Naive thymus-derived CD4-positive, alpha-beta T cell (primary cell): ENCODE measurements at regions of chr17 and their contacts with region 1.

Region 1: GRCh38 chr17:77331301-77331864 is 190.6 kb downstream of the SEC14L1 start:
- DNase-seq: peak; percentile 88 to 98 (median 93)
- ATAC-seq: peak; percentile 95
- H3K4me3 ChIP-seq: peak overlapping the region; percentile 10
- H3K4me3 Mint-ChIP-seq: peak overlapping the region; percentile 78 to 91 (median 84)
- H3K27ac ChIP-seq: peak overlapping the region; percentile 66
- H3K27ac Mint-ChIP-seq: peak overlapping the region; percentile 70 to 98 (median 91)
- H3K4me1 ChIP-seq: peaks cover 29% of the 10 kb centered on the region in 2 donors
- H3K4me1 Mint-ChIP-seq: peaks cover 37 to 55% (median 48%) of the 10 kb centered on the region in 7 donors
- H3K27me3 ChIP-seq: no peaks in the 10 kb centered on the region
- H3K27me3 Mint-ChIP-seq: no peaks in the 10 kb centered on the region

Region 2: GRCh38 chr17:77280980-77281903 is 50.1 kb before region 1 on chr17:
- CTCF ChIA-PET with region 1: no interaction called
- POLR2A ChIA-PET with region 1: no interaction called
- intact Hi-C with region 1: loop called in 1 of 2 experiments (anchors 5 kb)
- DNase-seq: peak; percentile 62 to 79 (median 72)
- ATAC-seq: peak; percentile 94
- H3K4me3 ChIP-seq: peak overlapping the region; percentile 54
- H3K4me3 Mint-ChIP-seq: peak overlapping the region; percentile 75 to 88 (median 78)
- H3K27ac ChIP-seq: no peak overlapping the region
- H3K27ac Mint-ChIP-seq: peak overlapping the region; percentile 67 to 95 (median 87)
- H3K4me1 ChIP-seq: peaks cover 3 to 10% of the 10 kb centered on the region in 2 donors
- H3K4me1 Mint-ChIP-seq: peaks cover 13 to 20% (median 17%) of the 10 kb centered on the region in 7 donors
- H3K27me3 ChIP-seq: no peaks in the 10 kb centered on the region
- H3K27me3 Mint-ChIP-seq: peaks cover 0 to 47% (median 11%) of the 10 kb centered on the region in 5 donors

Region 3: GRCh38 chr17:77382966-77383612 is 51.7 kb after region 1 on chr17:
- CTCF ChIA-PET with region 1: interaction called, 9 read pairs
- POLR2A ChIA-PET with region 1: interaction called, 84 read pairs
- intact Hi-C with region 1: loop called in 1 of 2 experiments (anchors 1 kb)
- DNase-seq: no peak
- ATAC-seq: no peak
- H3K4me3 ChIP-seq: peak overlapping the region; percentile 17
- H3K4me3 Mint-ChIP-seq: peak overlapping the region; percentile 60 to 90 (median 86)
- H3K27ac ChIP-seq: peak overlapping the region; percentile 58
- H3K27ac Mint-ChIP-seq: peak overlapping the region; percentile 76 to 94 (median 93)
- H3K4me1 ChIP-seq: peaks cover 73 to 83% of the 10 kb centered on the region in 2 donors
- H3K4me1 Mint-ChIP-seq: peaks cover 59 to 94% (median 89%) of the 10 kb centered on the region in 7 donors
- H3K27me3 ChIP-seq: no peaks in the 10 kb centered on the region
- H3K27me3 Mint-ChIP-seq: no peaks in the 10 kb centered on the region

Region 4: DNA sequence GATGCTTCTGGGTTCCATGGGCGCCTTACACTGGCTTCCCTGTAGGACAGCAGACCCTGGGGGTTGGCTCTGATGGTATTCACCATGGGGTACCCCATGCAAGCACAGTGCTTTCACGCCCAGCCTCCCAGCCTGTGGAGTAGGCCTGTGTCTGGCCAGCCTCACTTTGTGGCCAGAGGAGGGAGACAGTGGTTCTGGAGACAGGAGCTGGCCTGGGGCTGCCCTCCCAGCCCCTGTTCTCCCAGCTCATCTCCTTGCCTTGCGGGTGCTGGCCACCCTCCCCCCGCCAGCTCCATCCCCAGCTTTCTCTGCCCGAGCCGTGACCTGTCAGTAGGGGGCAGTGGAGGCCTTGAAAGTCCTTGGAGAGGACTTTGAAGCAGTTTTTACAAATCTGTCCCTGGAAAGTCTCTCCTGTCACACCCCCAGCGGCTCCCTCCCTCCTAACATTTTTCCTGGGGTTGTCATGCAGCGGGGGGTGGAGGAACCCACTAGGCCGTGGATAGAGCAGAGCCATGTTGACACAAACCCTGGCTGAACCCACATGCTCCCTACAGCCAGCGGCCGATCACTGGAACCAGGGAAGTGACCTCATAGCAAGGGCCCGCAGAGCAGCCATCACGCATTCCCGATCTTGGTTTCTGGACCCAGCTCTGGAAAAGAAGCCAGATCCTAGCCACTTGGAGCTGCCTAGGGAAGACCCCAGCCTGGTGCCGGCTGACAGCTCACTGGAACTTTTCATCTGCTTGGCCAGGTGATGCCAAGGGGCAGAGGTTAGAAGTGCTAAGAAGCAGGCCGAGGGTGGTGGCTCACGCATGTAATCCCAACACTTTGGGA is 98.8 kb after region 1 on chr17:
- CTCF ChIA-PET with region 1: interaction called, 23 read pairs
- POLR2A ChIA-PET with region 1: interaction called, 98 read pairs
- intact Hi-C with region 1: loop called in 1 of 2 experiments (anchors 1 kb)
- DNase-seq: peak; percentile 67 to 87 (median 78)
- ATAC-seq: peak; percentile 64
- H3K4me3 ChIP-seq: no peak overlapping the region
- H3K4me3 Mint-ChIP-seq: peak overlapping the region; percentile 17 to 98 (median 51)
- H3K27ac ChIP-seq: peak overlapping the region; percentile 64
- H3K27ac Mint-ChIP-seq: peak overlapping the region; percentile 80 to 100 (median 95)
- H3K4me1 ChIP-seq: peaks cover 68 to 98% of the 10 kb centered on the region in 2 donors
- H3K4me1 Mint-ChIP-seq: peaks cover 51 to 96% (median 82%) of the 10 kb centered on the region in 7 donors
- H3K27me3 ChIP-seq: no peaks in the 10 kb centered on the region
- H3K27me3 Mint-ChIP-seq: no peaks in the 10 kb centered on the region

Region 5: GRCh38 chr17:77451245-77451893 is 120.0 kb after region 1 on chr17:
- CTCF ChIA-PET with region 1: interaction called, 3 read pairs
- POLR2A ChIA-PET with region 1: interaction called, 10 read pairs
- intact Hi-C with region 1: no loop called
- DNase-seq: peak in 8 of 9 donors; percentile 64 to 82 (median 74)
- ATAC-seq: peak; percentile 75
- H3K4me3 ChIP-seq: peak overlapping the region; percentile 77
- H3K4me3 Mint-ChIP-seq: peak overlapping the region; percentile 92 to 100 (median 98)
- H3K27ac ChIP-seq: peak overlapping the region; percentile 92
- H3K27ac Mint-ChIP-seq: peak overlapping the region; percentile 93 to 100 (median 98)
- H3K4me1 ChIP-seq: peaks cover 31 to 40% of the 10 kb centered on the region in 2 donors
- H3K4me1 Mint-ChIP-seq: peaks cover 31 to 73% (median 37%) of the 10 kb centered on the region in 7 donors
- H3K27me3 ChIP-seq: no peaks in the 10 kb centered on the region
- H3K27me3 Mint-ChIP-seq: no peaks in the 10 kb centered on the region

Region 6: DNA sequence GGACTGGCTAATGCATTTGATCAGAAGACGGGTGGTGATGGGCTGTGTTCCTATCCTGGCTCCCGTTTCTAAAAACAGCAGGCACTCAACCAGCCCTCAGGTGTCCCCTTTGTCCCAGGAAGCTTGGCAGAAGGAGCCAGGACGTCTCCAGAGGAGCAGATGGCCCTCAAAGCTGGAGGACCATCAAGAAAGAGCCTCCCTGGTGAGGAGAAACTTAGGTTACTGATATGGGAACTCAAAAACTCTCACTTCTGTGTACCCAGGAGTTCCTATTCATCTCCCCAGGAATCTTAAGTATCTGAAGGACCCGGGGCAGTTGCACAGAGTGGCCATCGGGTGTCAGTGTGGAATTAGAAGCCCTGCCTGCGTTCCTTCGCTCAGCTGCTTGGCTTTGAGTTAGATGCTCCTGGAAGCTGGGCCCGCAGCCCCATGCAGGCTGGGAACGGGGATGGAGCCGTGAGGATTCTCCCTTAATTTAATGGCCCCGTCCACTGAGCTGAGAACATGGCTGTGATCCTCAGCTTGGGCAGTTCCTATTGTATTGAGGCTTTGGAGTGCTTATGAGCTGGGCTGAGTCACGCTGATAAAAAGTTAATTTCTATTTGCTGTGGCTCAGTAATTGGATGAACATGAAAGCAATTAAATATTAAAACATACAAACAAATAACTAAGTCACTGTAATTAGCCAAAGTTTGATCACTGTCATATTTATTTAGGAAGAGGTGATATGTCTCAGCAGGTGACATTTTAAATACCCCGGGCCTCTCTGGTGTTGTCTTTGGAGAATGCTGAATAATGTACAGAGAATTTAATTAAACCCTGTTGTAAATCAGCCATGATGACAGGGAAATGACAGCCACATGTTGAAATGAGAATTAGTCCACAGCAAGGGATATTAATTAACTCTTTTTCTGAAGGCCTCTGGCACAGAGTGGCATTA is 211.4 kb after region 1 on chr17:
- CTCF ChIA-PET with region 1: no interaction called
- POLR2A ChIA-PET with region 1: no interaction called
- intact Hi-C with region 1: loop called in 1 of 2 experiments (anchors 1 kb)
- DNase-seq: peak; percentile 32 to 72 (median 62)
- ATAC-seq: peak; percentile 87
- H3K4me3 ChIP-seq: no peak overlapping the region
- H3K4me3 Mint-ChIP-seq: no peak overlapping the region
- H3K27ac ChIP-seq: no peak overlapping the region
- H3K27ac Mint-ChIP-seq: no peak overlapping the region
- H3K4me1 ChIP-seq: peaks cover 0 to 5% of the 10 kb centered on the region in 2 donors
- H3K4me1 Mint-ChIP-seq: peaks cover 0 to 7% (median 0%) of the 10 kb centered on the region in 7 donors
- H3K27me3 ChIP-seq: no peaks in the 10 kb centered on the region
- H3K27me3 Mint-ChIP-seq: peaks cover 0 to 37% (median 5%) of the 10 kb centered on the region in 5 donors